Caco-2 (cell line): ENCODE measurements at regions of chr4 and their contacts with region 1.

Region 1: GRCh38 chr4:88211473-88212252 is 53.2 kb upstream of the ABCG2 start:
- DNase-seq: peak in 1 of 2 experiments; percentile 72
- H3K4me3 ChIP-seq: no peak overlapping the region
- H3K4me3 Mint-ChIP-seq: no peak overlapping the region
- H3K27ac Mint-ChIP-seq: no peak overlapping the region
- H3K4me1 ChIP-seq: peaks cover 23% of the 10 kb centered on the region
- H3K4me1 Mint-ChIP-seq: peaks cover 14% of the 10 kb centered on the region
- H3K27me3 ChIP-seq: no peaks in the 10 kb centered on the region
- H3K27me3 Mint-ChIP-seq: no peaks in the 10 kb centered on the region
- CTCF ChIP-seq: peak; percentile 41 to 73

Region 2: DNA sequence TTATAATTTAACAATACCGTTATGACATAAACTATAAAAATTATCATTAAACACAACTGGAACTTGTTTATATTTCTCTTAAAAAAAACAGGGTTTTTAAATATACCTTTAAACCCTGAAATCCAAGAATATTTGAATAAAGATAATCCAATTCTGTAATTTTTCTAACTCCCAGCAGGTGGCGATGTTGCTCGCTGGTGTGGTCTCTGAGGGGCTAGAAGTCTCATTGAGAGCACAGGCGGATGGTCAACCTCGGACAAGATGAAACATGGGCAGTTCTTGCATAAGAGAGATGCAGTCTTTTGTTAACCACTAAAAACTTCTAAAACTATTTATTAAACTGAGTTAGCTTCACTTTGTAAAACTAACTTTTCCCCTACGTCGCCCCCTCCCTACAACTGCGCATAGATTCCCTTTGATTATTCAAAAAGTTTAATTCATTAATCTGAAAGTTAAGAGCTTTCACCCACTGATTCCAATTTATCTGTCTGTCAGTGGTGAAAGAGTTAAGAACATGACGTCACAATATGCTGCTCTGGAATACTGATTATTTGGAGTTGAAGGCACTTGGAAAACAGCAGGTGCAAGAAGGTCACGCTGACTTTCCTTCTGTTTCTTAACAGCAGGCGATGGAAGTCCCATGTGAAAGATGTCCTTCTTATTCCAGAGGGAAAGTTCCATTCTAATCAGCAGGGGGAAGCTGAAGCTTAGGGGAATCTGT is 532.1 kb before region 1 on chr4:
- CTCF ChIA-PET with region 1: no interaction called
- POLR2A ChIA-PET with region 1: no interaction called
- intact Hi-C with region 1: loop called (anchors 5 kb)
- DNase-seq: peak; percentile 42 to 51
- H3K4me3 ChIP-seq: no peak overlapping the region
- H3K4me3 Mint-ChIP-seq: no peak overlapping the region
- H3K27ac Mint-ChIP-seq: no peak overlapping the region
- H3K4me1 ChIP-seq: no peaks in the 10 kb centered on the region
- H3K4me1 Mint-ChIP-seq: no peaks in the 10 kb centered on the region
- H3K27me3 ChIP-seq: no peaks in the 10 kb centered on the region
- H3K27me3 Mint-ChIP-seq: peaks cover 3% of the 10 kb centered on the region
- CTCF ChIP-seq: peak; percentile 71 to 74

Region 3: DNA sequence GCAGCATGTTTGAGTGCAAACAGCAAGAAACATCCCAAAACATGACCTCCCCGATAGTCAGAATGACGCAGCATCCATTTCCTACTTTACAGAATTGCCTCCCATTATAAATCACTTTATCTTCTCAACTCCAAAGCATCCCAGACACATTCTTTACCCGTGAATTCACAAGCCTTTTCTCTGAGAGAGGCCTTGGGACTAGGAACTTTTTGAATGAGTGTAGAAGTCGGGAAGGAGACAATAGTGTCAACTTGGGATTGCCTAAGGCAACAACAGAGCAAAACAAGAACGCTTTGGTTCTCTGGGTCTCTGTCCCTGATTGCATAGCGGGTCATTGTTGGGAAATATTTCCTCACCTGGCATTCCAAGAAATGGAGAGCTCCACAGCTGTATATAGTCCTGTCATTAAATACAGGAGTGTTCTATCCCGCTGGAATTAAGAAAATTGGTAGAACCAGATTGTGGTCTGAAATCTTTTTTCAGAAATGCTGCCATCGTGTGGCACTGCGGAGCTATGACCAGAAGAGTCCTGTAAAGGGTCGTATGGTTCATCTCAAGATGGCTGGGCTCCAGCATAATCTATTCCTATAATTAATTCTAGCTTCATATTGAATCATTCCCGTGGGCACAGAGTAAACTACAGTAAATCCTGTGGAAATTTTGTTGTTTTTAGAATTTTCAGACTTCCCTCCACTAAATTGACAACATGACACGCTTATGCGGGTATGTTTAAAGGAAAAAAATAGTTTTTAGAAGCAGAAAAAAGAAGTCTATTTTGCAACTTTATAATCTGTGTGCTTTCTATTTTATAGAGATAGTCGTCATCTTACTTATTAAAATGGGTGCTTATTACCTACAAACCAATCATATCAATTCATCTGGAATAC is 238.1 kb before region 1 on chr4:
- CTCF ChIA-PET with region 1: interaction called, 3 read pairs
- POLR2A ChIA-PET with region 1: no interaction called
- intact Hi-C with region 1: loop called (anchors 1 kb)
- DNase-seq: peak; percentile 57 to 62
- H3K4me3 ChIP-seq: no peak overlapping the region
- H3K4me3 Mint-ChIP-seq: peak overlapping the region; percentile 11
- H3K27ac Mint-ChIP-seq: no peak overlapping the region
- H3K4me1 ChIP-seq: no peaks in the 10 kb centered on the region
- H3K4me1 Mint-ChIP-seq: peaks cover 6% of the 10 kb centered on the region
- H3K27me3 ChIP-seq: no peaks in the 10 kb centered on the region
- H3K27me3 Mint-ChIP-seq: peaks cover 2% of the 10 kb centered on the region
- CTCF ChIP-seq: peak; percentile 71 to 85

Region 4: GRCh38 chr4:88033309-88033708 is 178.4 kb before region 1 on chr4:
- CTCF ChIA-PET with region 1: interaction called, 34 read pairs
- POLR2A ChIA-PET with region 1: interaction called, 5 read pairs
- intact Hi-C with region 1: loop called (anchors 1 kb)
- DNase-seq: peak; percentile 58 to 70
- H3K4me3 ChIP-seq: no peak overlapping the region
- H3K4me3 Mint-ChIP-seq: no peak overlapping the region
- H3K27ac Mint-ChIP-seq: no peak overlapping the region
- H3K4me1 ChIP-seq: no peaks in the 10 kb centered on the region
- H3K4me1 Mint-ChIP-seq: no peaks in the 10 kb centered on the region
- H3K27me3 ChIP-seq: no peaks in the 10 kb centered on the region
- H3K27me3 Mint-ChIP-seq: no peaks in the 10 kb centered on the region
- CTCF ChIP-seq: peak; percentile 68

Region 5: GRCh38 chr4:88054901-88055300 is 156.8 kb before region 1 on chr4:
- CTCF ChIA-PET with region 1: interaction called, 37 read pairs
- POLR2A ChIA-PET with region 1: no interaction called
- intact Hi-C with region 1: loop called (anchors 1 kb)
- DNase-seq: peak; percentile 71
- H3K4me3 ChIP-seq: no peak overlapping the region
- H3K4me3 Mint-ChIP-seq: no peak overlapping the region
- H3K27ac Mint-ChIP-seq: no peak overlapping the region
- H3K4me1 ChIP-seq: no peaks in the 10 kb centered on the region
- H3K4me1 Mint-ChIP-seq: peaks cover 6% of the 10 kb centered on the region
- H3K27me3 ChIP-seq: no peaks in the 10 kb centered on the region
- H3K27me3 Mint-ChIP-seq: no peaks in the 10 kb centered on the region
- CTCF ChIP-seq: peak; percentile 63 to 80

Region 6: GRCh38 chr4:88104902-88105610 is 106.6 kb before region 1 on chr4:
- CTCF ChIA-PET with region 1: no interaction called
- POLR2A ChIA-PET with region 1: no interaction called
- intact Hi-C with region 1: loop called (anchors 5 kb)
- DNase-seq: no peak
- H3K4me3 ChIP-seq: no peak overlapping the region
- H3K4me3 Mint-ChIP-seq: no peak overlapping the region
- H3K27ac Mint-ChIP-seq: peak overlapping the region; percentile 15
- H3K4me1 ChIP-seq: peaks cover 42% of the 10 kb centered on the region
- H3K4me1 Mint-ChIP-seq: peaks cover 27% of the 10 kb centered on the region
- H3K27me3 ChIP-seq: no peaks in the 10 kb centered on the region
- H3K27me3 Mint-ChIP-seq: no peaks in the 10 kb centered on the region
- CTCF ChIP-seq: no peak

Region 7: GRCh38 chr4:88158489-88159243 is 53.0 kb before region 1 on chr4 and contains the start of gene ABCG2:
- CTCF ChIA-PET with region 1: no interaction called
- POLR2A ChIA-PET with region 1: no interaction called
- intact Hi-C with region 1: loop called (anchors 5 kb)
- DNase-seq: peak; percentile 77 to 83
- H3K4me3 ChIP-seq: peak within 1 kb of the TSS; percentile 85
- H3K4me3 Mint-ChIP-seq: peak within 1 kb of the TSS; percentile 80
- H3K27ac Mint-ChIP-seq: peak within 1 kb of the TSS; percentile 67
- H3K4me1 ChIP-seq: peaks cover 20% of the 10 kb centered on the region
- H3K4me1 Mint-ChIP-seq: peaks cover 9% of the 10 kb centered on the region
- H3K27me3 ChIP-seq: no peaks in the 10 kb centered on the region
- H3K27me3 Mint-ChIP-seq: no peaks in the 10 kb centered on the region
- CTCF ChIP-seq: no peak
- total RNA-seq, gene ABCG2: 23.7 and 26.0 TPM in 2 replicates

Region 8: GRCh38 chr4:88169298-88169697 is 42.4 kb before region 1 on chr4:
- CTCF ChIA-PET with region 1: no interaction called
- POLR2A ChIA-PET with region 1: no interaction called
- intact Hi-C with region 1: no loop called
- DNase-seq: no peak
- H3K4me3 ChIP-seq: no peak overlapping the region
- H3K4me3 Mint-ChIP-seq: no peak overlapping the region
- H3K27ac Mint-ChIP-seq: no peak overlapping the region
- H3K4me1 ChIP-seq: no peaks in the 10 kb centered on the region
- H3K4me1 Mint-ChIP-seq: peaks cover 5% of the 10 kb centered on the region
- H3K27me3 ChIP-seq: no peaks in the 10 kb centered on the region
- H3K27me3 Mint-ChIP-seq: no peaks in the 10 kb centered on the region
- CTCF ChIP-seq: no peak

Region 9: DNA sequence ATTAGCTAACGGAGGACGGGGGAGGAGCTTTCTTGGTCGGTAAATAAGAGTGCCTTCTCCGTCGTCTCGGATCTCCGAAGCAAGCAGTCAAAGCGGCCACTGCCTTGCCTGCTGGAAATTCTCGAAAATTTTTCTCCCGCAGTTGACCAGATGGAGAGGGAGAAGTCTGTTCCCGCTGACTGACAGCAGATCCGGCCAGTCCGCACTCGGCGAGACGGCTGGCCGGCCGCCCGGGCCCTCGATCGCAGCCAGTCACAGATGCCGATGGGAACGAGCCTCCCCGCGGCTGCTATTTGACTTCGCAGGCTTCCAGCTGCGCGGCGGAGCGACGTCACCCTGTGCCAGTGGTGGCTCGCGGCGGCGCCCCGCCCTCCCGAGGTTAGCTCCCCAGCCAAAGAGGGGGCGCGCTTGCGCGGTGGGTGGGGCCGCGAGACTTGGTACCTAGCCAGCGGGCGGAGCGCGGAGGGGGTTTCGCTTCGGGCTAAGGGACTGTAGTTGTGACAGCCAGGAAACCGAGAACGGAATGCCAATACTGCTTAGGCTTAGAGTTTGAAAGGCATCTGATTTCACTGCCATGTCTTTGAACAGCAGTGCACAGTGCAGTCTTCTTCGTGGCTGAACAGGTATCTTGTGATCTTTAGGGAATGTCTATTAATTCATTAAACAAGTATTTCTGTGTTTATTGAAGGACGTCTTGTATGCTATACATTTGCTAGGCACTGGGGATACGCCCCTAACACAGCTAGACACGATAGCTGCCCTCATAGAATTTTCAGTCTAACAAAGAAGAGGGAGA is 73.0 kb after region 1 on chr4 and contains the start of gene PPM1K:
- CTCF ChIA-PET with region 1: no interaction called
- POLR2A ChIA-PET with region 1: no interaction called
- intact Hi-C with region 1: no loop called
- DNase-seq: peak; percentile 98 to 99
- H3K4me3 ChIP-seq: peak within 1 kb of the TSS; percentile 79
- H3K4me3 Mint-ChIP-seq: peak within 1 kb of the TSS; percentile 94
- H3K27ac Mint-ChIP-seq: peak within 1 kb of the TSS; percentile 95
- H3K4me1 ChIP-seq: peaks cover 30% of the 10 kb centered on the region
- H3K4me1 Mint-ChIP-seq: peaks cover 14% of the 10 kb centered on the region
- H3K27me3 ChIP-seq: no peaks in the 10 kb centered on the region
- H3K27me3 Mint-ChIP-seq: no peaks in the 10 kb centered on the region
- CTCF ChIP-seq: no peak
- total RNA-seq, gene PPM1K: 23.8 and 24.3 TPM in 2 replicates

Region 10: DNA sequence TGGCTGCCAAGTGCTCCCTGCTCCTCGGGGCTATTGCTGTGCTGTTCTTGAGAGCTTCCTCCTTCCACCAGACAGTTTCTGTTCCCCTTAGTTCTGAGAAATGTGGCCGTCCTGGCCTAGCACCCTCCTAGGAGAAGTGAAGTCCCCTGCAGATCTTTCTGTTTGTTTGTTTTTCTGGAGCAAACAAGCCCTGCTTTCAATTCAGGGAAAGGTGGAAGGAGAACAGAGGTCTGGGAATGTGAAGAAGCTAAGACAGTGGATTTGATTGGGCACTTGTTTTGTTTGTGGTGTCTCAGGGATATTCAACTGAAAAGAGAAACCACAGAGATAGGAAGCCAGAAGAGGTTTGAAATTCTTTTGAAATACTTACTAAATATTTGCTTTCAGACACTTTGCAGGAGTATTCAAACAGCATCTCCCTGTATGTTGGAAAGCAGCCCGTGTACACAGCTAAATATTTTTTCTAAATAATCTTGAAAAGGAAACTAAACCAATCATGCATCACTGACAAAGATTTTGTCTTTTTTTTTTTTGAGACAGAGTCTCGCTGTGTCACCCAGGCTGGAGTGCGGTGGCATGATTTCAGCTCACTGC is 109.2 kb after region 1 on chr4:
- CTCF ChIA-PET with region 1: no interaction called
- POLR2A ChIA-PET with region 1: no interaction called
- intact Hi-C with region 1: no loop called
- DNase-seq: peak in 1 of 2 experiments; percentile 31
- H3K4me3 ChIP-seq: no peak overlapping the region
- H3K4me3 Mint-ChIP-seq: peak overlapping the region; percentile 23
- H3K27ac Mint-ChIP-seq: peak overlapping the region; percentile 30
- H3K4me1 ChIP-seq: peaks cover 36% of the 10 kb centered on the region
- H3K4me1 Mint-ChIP-seq: peaks cover 19% of the 10 kb centered on the region
- H3K27me3 ChIP-seq: no peaks in the 10 kb centered on the region
- H3K27me3 Mint-ChIP-seq: no peaks in the 10 kb centered on the region
- CTCF ChIP-seq: no peak

Region 11: DNA sequence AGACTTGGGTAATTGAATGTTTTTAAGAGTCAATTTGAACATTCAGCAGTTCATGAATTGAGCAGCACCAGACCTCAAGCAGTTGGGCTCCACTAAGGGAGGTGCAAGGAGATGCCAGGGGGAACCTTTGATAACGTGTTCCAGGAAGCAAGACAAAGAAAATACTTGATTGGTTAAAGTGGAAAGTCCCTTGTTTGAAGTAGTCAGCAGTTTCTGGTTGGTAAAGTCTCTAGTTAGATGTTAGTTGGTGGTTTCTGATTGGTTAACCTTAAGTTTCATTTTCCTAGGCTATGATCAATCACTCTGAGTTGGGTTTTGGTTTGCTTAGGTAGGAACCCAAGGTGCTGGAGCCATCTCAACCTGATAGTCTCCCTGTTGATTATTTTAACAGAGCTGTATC is 171.0 kb after region 1 on chr4:
- CTCF ChIA-PET with region 1: no interaction called
- POLR2A ChIA-PET with region 1: no interaction called
- intact Hi-C with region 1: no loop called
- DNase-seq: no peak
- H3K4me3 ChIP-seq: no peak overlapping the region
- H3K4me3 Mint-ChIP-seq: no peak overlapping the region
- H3K27ac Mint-ChIP-seq: no peak overlapping the region
- H3K4me1 ChIP-seq: no peaks in the 10 kb centered on the region
- H3K4me1 Mint-ChIP-seq: no peaks in the 10 kb centered on the region
- H3K27me3 ChIP-seq: no peaks in the 10 kb centered on the region
- H3K27me3 Mint-ChIP-seq: peaks cover 2% of the 10 kb centered on the region
- CTCF ChIP-seq: no peak